Esophagus squamous epithelium (tissue), 5 donors: ENCODE measurements at regions of chr5 and their contacts with region 1.

Region 1: GRCh38 chr5:132813599-132814502 is 749 bp downstream of the SOWAHA start:
- DNase-seq: no peak
- H3K4me3 ChIP-seq: peak overlapping the region; percentile 35 to 69 (median 48)
- H3K27ac ChIP-seq: no peak overlapping the region
- H3K4me1 ChIP-seq: peaks cover 9 to 26% (median 18%) of the 10 kb centered on the region in 3 donors
- H3K27me3 ChIP-seq: peaks cover 6 to 56% (median 14%) of the 10 kb centered on the region in 4 donors
- CTCF ChIP-seq: no peak
- POLR2A ChIP-seq: no peak

Region 2: DNA sequence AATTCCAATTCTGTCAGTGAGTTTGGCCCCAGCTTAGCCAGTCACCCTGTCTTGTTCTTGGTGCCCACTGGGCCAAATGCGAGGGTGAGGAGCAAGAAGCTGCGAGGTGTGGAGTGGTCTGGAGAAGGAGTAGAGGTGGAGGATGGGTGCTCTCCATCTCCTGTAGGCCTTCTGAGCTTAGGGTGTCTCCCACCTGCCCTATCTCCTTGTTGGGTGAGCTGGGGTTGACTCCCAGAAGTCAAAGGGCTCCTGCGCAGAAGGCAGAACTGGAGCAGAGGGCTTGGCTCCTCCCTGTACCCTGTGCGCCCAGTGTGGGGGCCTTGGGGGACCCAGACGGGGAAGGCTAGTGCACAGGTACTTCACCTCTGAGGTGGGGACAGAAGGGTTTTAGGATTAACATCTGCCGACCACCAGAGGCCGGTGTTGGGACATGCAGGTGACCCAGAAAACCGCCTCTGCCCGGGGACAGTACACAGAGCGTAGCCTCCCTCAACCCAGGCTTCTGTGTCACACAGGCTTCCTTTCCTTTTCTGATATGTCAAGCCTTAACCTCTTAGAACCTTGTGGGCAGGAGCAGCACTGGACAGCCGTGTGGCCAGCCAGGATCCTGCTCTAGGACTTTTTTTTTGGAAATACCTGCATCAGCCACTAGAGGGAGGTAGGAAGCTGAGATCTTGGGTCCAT is 287.4 kb before region 1 on chr5:
- intact Hi-C with region 1: loop called (anchors 10 kb)
- DNase-seq: no peak
- H3K4me3 ChIP-seq: no peak overlapping the region
- H3K27ac ChIP-seq: no peak overlapping the region
- H3K4me1 ChIP-seq: peaks cover 0 to 9% (median 0%) of the 10 kb centered on the region in 3 donors
- H3K27me3 ChIP-seq: no peaks in the 10 kb centered on the region
- CTCF ChIP-seq: peak; percentile 73 to 82 (median 76)
- POLR2A ChIP-seq: no peak

Region 3: DNA sequence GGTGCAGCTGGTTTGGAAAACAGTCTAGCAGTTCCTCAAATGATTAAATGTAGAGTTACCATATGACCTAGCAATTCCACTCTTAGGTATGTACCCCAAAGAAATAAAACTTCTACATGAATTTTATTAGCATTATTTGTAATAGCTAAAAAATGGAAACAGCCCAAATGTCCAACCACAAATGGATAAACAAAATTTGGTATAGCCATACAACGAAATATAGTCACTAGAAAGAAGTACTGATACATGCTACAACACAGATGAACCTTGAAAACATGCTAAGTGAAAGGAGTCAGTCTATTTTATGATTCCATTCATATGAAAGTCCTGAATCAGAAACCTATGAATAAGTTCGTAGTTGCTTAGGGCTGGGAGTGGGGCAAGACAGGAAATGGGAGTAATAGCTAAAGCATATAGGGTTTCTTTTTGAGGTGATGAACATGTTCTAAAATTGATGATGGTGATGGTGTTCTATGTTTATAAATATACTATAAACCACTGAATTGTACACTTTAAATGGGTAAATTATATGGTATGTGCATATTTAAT is 46.1 kb after region 1 on chr5:
- intact Hi-C with region 1: no loop called
- DNase-seq: no peak
- H3K4me3 ChIP-seq: no peak overlapping the region
- H3K27ac ChIP-seq: no peak overlapping the region
- H3K4me1 ChIP-seq: no peaks in the 10 kb centered on the region
- H3K27me3 ChIP-seq: no peaks in the 10 kb centered on the region
- CTCF ChIP-seq: no peak
- POLR2A ChIP-seq: no peak

Region 4: GRCh38 chr5:133123297-133123696 is 309.4 kb after region 1 on chr5:
- intact Hi-C with region 1: no loop called
- DNase-seq: no peak
- H3K4me3 ChIP-seq: no peak overlapping the region
- H3K27ac ChIP-seq: no peak overlapping the region
- H3K4me1 ChIP-seq: peaks cover 0 to 41% (median 0%) of the 10 kb centered on the region in 3 donors
- H3K27me3 ChIP-seq: peaks cover 0 to 5% (median 0%) of the 10 kb centered on the region in 4 donors
- CTCF ChIP-seq: no peak
- POLR2A ChIP-seq: no peak